ENCODE measurements at regions of chr5 and their contacts with region 1.

Region 1: DNA sequence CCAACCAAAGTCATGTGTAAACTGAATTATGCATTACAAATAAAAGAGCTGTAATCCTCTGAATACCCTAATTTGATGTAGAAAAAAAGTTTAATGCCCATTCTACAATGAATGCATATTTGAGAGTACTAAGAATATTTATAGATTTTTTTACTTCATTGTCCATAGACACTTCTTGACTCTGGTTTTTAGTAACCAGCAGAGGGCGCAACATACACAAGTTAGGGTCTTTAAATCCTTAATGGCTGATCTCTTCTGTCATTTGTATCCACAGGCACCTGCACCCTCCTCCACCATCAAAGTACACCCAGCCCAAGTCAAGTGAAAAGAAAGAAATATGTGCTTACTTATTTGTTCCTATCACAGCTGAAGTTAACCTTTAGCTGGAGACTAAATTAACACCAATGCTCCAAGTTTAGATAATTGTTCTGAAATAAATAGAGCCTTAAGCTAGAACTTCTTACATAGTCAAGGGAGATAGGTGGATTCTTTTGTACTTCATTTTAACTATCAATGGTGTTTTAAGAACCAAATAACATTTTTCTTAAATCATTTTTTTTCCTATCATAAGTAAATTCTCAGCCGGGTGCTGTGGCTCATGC is 524.2 kb upstream of the DAB2 start:
- DNase-seq: peak; percentile 56 to 66
- H3K4me3 ChIP-seq: no peak overlapping the region
- H3K27ac ChIP-seq: no peak overlapping the region
- H3K4me1 ChIP-seq: no peaks in the 10 kb centered on the region
- H3K27me3 ChIP-seq: no peaks in the 10 kb centered on the region
- CTCF ChIP-seq: peak; percentile 96

Region 2: GRCh38 chr5:38724301-38725030 is 1224.5 kb before region 1 on chr5:
- CTCF ChIA-PET with region 1: no interaction called
- POLR2A ChIA-PET with region 1: no interaction called
- intact Hi-C with region 1: no loop called
- DNase-seq: no peak
- H3K4me3 ChIP-seq: no peak overlapping the region
- H3K27ac ChIP-seq: no peak overlapping the region
- H3K4me1 ChIP-seq: no peaks in the 10 kb centered on the region
- H3K27me3 ChIP-seq: no peaks in the 10 kb centered on the region; the same call in 1 of the 2 replicates
- CTCF ChIP-seq: no peak

Region 3: GRCh38 chr5:39578887-39579497 is 370.0 kb before region 1 on chr5:
- CTCF ChIA-PET with region 1: no interaction called
- POLR2A ChIA-PET with region 1: no interaction called
- intact Hi-C with region 1: loop called (anchors 2 kb)
- DNase-seq: no peak
- H3K4me3 ChIP-seq: no peak overlapping the region
- H3K27ac ChIP-seq: no peak overlapping the region
- H3K4me1 ChIP-seq: no peaks in the 10 kb centered on the region
- H3K27me3 ChIP-seq: no peaks in the 10 kb centered on the region
- CTCF ChIP-seq: peak; percentile 92

Region 4: DNA sequence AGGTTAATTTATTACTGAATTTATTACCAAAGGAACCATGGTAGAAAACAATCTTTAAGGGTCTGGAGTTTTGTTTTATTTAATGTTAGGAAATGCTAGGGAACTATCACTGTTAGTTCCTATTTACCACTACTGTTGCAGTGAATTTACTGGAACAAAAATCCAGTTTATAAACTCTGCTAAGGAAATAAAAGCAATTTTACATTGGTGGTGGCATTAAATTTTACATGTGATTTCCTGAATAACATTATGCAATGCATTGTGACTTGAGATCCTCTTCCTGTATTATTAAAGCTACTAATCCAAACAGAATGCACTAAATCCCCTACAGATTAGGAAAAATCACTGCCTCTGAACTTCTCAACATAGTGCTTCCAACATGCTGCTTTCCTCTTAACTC is 131.2 kb after region 1 on chr5:
- CTCF ChIA-PET with region 1: no interaction called
- POLR2A ChIA-PET with region 1: no interaction called
- intact Hi-C with region 1: no loop called
- DNase-seq: no peak
- H3K4me3 ChIP-seq: no peak overlapping the region
- H3K27ac ChIP-seq: no peak overlapping the region
- H3K4me1 ChIP-seq: no peaks in the 10 kb centered on the region
- H3K27me3 ChIP-seq: no peaks in the 10 kb centered on the region
- CTCF ChIP-seq: no peak

Region 5: DNA sequence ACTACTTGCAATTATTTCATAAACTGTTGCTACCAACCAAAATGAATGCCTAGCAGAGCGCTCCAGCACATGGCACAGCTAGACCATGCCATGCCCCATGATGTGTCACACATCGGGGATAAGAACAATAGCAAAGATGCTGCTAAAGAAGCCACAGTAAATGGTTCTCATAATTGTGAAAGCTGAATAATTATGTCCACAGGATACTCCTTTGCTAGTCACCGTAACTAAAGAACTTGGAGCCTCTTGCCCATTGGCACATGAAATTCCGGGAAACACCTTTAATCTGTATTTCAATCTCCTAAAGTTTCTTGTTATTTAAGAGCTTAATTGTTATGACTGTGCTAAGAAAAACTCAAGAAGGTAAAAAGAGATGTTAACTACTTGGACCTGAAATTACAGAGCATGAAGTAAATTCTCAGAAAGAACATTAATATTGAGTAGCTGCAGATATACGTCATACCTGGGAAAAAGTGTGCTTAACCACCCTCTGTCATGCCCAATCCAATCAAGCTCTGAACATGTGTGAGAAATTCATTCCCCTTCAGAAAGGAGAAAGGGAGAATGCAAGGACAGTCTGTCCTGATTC is 335.8 kb after region 1 on chr5:
- CTCF ChIA-PET with region 1: no interaction called
- POLR2A ChIA-PET with region 1: no interaction called
- intact Hi-C with region 1: loop called (anchors 5 kb)
- DNase-seq: no peak
- H3K4me3 ChIP-seq: no peak overlapping the region
- H3K27ac ChIP-seq: no peak overlapping the region
- H3K4me1 ChIP-seq: no peaks in the 10 kb centered on the region
- H3K27me3 ChIP-seq: no peaks in the 10 kb centered on the region
- CTCF ChIP-seq: no peak

Region 6: DNA sequence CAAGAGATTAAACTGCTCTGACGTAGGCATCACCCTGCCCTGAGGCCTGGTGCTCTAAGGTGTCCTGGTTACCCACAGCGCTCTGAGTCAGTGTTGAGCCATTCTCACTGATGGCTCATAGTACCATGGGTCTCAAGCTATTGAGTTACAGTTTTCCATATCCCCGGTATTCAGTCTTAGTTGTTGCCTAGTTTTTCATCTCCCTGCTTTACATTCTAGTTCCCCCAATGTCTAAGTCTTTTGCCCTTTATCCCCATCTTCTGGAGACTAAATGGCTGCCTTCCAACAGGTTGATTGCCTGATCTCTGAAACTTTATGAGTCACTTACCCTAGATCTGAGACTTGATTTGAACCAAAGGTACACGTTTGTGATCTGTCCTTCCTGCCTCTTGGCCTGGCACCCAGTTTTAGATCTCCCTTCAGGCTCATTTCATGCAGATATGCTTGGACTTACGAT is 569.6 kb after region 1 on chr5:
- CTCF ChIA-PET with region 1: no interaction called
- POLR2A ChIA-PET with region 1: no interaction called
- intact Hi-C with region 1: loop called (anchors 1 kb)
- DNase-seq: peak; percentile 96 to 98
- H3K4me3 ChIP-seq: no peak overlapping the region
- H3K27ac ChIP-seq: peak overlapping the region; percentile 84
- H3K4me1 ChIP-seq: peaks cover 33% of the 10 kb centered on the region
- H3K27me3 ChIP-seq: no peaks in the 10 kb centered on the region
- CTCF ChIP-seq: no peak

Region 7: DNA sequence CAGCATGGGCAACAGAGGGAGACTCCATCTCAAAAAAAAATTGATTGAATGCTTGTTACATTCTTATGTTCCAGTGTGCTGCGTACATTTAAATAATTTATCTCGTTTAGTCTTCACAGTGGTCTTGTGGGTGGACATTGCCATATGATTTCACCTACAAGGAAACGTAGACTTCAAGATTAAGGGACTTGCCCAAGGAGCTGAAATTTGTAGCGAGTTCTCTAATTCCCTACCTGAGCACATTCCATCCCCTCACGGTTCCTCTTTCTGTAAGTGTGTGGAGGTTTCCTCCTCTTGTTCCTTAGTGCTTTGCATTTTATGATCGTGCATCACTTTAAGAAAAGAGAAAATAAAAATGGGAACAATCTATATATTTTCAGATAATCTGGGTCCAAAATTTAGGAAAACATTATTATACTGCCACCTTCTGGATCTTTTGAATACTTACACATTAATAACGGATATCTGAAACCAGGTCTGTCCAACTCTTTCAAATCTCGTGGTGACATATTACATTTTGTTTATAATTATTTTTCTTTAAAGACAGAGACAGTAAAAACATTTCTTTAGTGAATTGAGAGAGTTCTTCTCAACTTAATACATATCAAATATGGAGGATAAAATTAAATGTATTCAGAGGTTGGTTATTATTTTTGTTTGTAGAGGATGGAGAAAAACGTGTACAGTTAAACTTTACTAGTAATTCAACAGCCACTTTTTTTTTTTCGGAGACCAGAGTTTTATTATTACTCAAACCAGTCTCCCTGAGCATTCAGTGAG is 930.4 kb after region 1 on chr5:
- CTCF ChIA-PET with region 1: no interaction called
- POLR2A ChIA-PET with region 1: no interaction called
- intact Hi-C with region 1: loop called (anchors 2 kb)
- DNase-seq: peak; percentile 6 to 47
- H3K4me3 ChIP-seq: no peak overlapping the region
- H3K27ac ChIP-seq: no peak overlapping the region
- H3K4me1 ChIP-seq: no peaks in the 10 kb centered on the region
- H3K27me3 ChIP-seq: no peaks in the 10 kb centered on the region
- CTCF ChIP-seq: peak; percentile 90